ENCODE measurements at regions of chr11 and their contacts with region 1.

Region 1: DNA sequence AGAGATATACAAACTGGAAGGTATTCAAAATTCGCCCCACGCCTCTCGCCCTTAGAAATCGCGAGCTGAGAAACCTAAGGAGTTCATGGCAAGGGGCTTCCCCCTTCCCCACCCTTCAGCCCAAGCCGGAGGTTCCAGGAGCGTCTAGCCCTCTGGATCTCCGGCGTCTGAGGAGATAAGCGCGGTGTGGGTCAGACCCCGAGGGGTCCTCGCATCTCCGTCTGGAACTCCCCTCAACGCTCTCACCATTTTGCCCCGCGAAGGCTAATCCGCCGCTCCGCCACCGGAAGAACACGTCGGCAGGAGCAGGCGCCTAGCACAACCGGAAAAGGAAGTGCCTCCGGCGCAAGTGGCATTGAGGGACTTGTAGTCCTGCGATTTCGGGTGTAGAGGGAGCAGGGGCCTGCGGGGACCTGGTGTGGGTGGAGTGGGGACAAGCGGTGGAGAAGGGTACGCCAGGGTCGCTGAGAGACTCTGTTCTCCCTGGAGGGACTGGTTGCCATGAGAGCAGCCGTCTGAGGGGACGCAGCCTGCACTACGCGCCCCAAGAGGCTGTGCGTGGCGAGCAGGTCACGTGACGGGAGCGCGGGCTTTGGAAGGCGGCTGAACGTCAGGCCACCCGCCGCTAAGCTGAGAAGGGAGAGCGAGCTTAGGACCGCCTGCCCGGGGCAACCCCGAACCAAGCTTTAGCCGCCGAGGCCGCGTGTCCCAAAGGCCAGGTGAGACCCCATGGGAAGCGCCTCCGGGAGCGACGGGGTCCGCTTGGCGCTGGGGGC is at the starts of genes FEN1 and TMEM258:
- DNase-seq: peak; percentile 82 to 91 (median 88)
- ATAC-seq: peak; percentile 91
- H3K4me3 ChIP-seq: peak within 1 kb of the TSS; percentile 82
- H3K4me3 Mint-ChIP-seq: peak within 1 kb of the TSS; percentile 91 to 99 (median 96)
- H3K27ac ChIP-seq: peak within 1 kb of the TSS; percentile 96
- H3K27ac Mint-ChIP-seq: peak within 1 kb of the TSS; percentile 96 to 100 (median 99)
- H3K4me1 ChIP-seq: peaks cover 9 to 14% of the 10 kb centered on the region in 2 donors
- H3K4me1 Mint-ChIP-seq: peaks cover 14 to 57% (median 34%) of the 10 kb centered on the region in 7 donors
- H3K27me3 ChIP-seq: no peaks in the 10 kb centered on the region
- H3K27me3 Mint-ChIP-seq: no peaks in the 10 kb centered on the region
- total RNA-seq, gene FEN1: 7.6 to 101 (median 7.9) TPM
- total RNA-seq, gene TMEM258: 58.4 to 182 (median 83.3) TPM

Region 2: GRCh38 chr11:60906132-60906972 is 886.1 kb before region 1 on chr11 and contains the start of gene PRPF19:
- CTCF ChIA-PET with region 1: no interaction called
- POLR2A ChIA-PET with region 1: no interaction called
- intact Hi-C with region 1: loop called in 1 of 2 experiments (anchors 2 kb)
- DNase-seq: peak; percentile 98 to 100 (median 99)
- ATAC-seq: peak; percentile 96
- H3K4me3 ChIP-seq: peak within 1 kb of the TSS; percentile 89
- H3K4me3 Mint-ChIP-seq: peak within 1 kb of the TSS; percentile 84 to 95 (median 91)
- H3K27ac ChIP-seq: peak within 1 kb of the TSS; percentile 88
- H3K27ac Mint-ChIP-seq: peak within 1 kb of the TSS; percentile 95 to 100 (median 98)
- H3K4me1 ChIP-seq: peaks cover 22 to 26% of the 10 kb centered on the region in 2 donors
- H3K4me1 Mint-ChIP-seq: peaks cover 34 to 69% (median 58%) of the 10 kb centered on the region in 7 donors
- H3K27me3 ChIP-seq: no peaks in the 10 kb centered on the region
- H3K27me3 Mint-ChIP-seq: peaks cover 0 to 11% (median 0%) of the 10 kb centered on the region in 5 donors
- total RNA-seq, gene PRPF19: 72.8 to 139 (median 85.6) TPM

Region 3: DNA sequence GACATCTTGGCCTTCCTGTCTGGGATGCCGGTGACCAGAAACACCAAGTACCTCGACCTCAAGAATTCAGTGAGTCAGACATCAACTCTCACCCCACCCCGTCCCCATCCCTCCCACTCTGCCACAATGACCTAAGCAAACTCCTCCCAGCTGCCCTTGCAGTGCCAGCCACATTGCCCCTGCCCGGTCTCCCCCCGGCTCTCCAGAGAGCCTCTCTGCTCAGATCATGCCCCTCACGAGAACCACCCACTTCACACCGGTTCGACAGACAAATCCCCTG is 63.6 kb before region 1 on chr11:
- CTCF ChIA-PET with region 1: no interaction called
- POLR2A ChIA-PET with region 1: no interaction called
- intact Hi-C with region 1: no loop called
- DNase-seq: no peak
- ATAC-seq: no peak
- H3K4me3 ChIP-seq: no peak overlapping the region
- H3K4me3 Mint-ChIP-seq: no peak overlapping the region
- H3K27ac ChIP-seq: no peak overlapping the region
- H3K27ac Mint-ChIP-seq: peak overlapping the region in 1 of 9 donors; percentile 29
- H3K4me1 ChIP-seq: no peaks in the 10 kb centered on the region
- H3K4me1 Mint-ChIP-seq: peaks cover 4 to 8% (median 5%) of the 10 kb centered on the region in 7 donors
- H3K27me3 ChIP-seq: no peaks in the 10 kb centered on the region
- H3K27me3 Mint-ChIP-seq: peaks cover 0 to 4% (median 0%) of the 10 kb centered on the region in 5 donors

Region 4: DNA sequence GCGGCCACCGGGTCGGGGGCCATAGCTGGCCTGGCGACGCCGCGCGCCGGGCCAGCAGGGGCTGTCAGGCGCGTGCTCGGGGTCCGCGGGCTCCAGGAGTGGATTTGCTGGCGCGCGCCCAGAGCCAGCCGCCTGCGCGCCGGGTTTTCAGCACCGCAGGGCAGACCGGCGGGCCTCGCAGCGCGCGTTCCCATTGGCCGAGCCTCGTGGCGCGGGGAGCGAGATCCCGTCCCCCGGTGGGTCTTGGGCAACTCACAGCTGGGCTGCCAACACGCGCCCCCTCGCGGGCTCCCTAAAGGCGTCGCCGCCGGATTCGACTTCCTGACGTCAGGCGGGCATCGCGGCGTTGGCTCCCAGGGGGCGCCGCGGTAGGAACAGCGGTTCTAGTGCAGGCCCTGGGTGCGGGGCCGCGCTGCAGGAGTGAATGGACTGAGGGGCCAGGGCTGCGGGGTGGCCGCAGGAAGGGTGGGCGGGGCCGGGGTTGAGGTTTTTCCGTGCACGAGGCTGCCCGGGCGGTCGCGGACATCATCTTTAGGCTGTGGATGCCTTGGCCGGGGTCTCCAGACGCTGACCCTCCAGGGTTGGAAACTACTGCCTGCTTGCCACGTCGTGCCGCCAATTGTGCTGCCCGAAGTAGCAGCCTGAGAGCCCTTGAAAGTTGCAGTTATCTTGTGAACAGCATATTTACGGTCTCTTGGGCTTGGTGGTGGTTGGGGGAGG is 24.4 kb after region 1 on chr11 and contains the start of gene FADS1:
- CTCF ChIA-PET with region 1: interaction called, 19 read pairs
- POLR2A ChIA-PET with region 1: interaction called, 14 read pairs
- intact Hi-C with region 1: loop called (anchors 1 kb)
- DNase-seq: peak; percentile 45 to 88 (median 60)
- ATAC-seq: peak; percentile 77
- H3K4me3 ChIP-seq: peak within 1 kb of the TSS; percentile 74
- H3K4me3 Mint-ChIP-seq: peak within 1 kb of the TSS; percentile 84 to 98 (median 92)
- H3K27ac ChIP-seq: peak within 1 kb of the TSS; percentile 51
- H3K27ac Mint-ChIP-seq: peak within 1 kb of the TSS in 5 of 9 donors; percentile 8 to 97 (median 83)
- H3K4me1 ChIP-seq: peaks cover 8 to 12% of the 10 kb centered on the region in 2 donors
- H3K4me1 Mint-ChIP-seq: peaks cover 0 to 24% (median 19%) of the 10 kb centered on the region in 7 donors
- H3K27me3 ChIP-seq: peaks cover 0 to 10% of the 10 kb centered on the region in 2 donors
- H3K27me3 Mint-ChIP-seq: peaks cover 3 to 30% (median 15%) of the 10 kb centered on the region in 5 donors
- total RNA-seq, gene FADS1: 0.62 to 52.1 (median 2.3) TPM

Region 5: DNA sequence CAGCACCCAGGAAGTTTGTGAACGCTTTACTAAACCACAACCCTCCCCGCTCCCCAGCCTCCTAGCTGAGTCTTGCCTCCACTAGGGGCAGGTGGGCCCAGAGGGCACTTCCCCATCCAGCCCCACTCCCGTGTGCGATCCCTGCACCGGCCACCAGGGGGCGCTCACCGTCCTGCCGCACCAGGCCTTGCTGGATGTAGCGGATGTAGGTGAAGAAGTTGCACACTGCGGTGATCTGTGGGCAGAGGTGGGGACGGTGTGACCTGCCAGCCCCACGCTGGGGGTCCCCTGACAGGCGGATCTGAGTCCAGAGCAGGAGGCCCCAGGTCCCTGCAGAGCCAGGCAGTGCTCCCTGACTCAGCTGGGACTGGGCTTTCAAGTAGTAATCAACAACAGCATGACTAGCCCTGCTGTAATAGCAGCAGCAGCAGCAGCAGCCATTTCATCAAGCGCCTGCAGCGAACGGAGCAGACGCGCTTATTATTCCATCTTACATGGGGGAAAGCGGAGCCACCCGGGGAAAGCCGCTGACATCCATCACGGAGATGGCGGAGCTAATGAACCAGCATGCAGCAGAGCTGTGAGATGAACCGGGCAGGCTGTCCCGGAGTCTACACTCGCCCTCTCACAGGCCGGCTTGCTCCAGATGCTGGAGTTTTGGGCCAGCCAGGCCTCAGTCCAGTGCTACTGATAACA is 106.8 kb after region 1 on chr11:
- CTCF ChIA-PET with region 1: interaction called, 22 read pairs
- POLR2A ChIA-PET with region 1: no interaction called
- intact Hi-C with region 1: loop called (anchors 1 to 2 kb)
- DNase-seq: peak; percentile 88 to 98 (median 93)
- ATAC-seq: peak; percentile 98
- H3K4me3 ChIP-seq: no peak overlapping the region
- H3K4me3 Mint-ChIP-seq: no peak overlapping the region
- H3K27ac ChIP-seq: no peak overlapping the region
- H3K27ac Mint-ChIP-seq: peak overlapping the region; percentile 55 to 93 (median 69)
- H3K4me1 ChIP-seq: peaks cover 4% of the 10 kb centered on the region in 2 donors
- H3K4me1 Mint-ChIP-seq: peaks cover 4 to 7% (median 5%) of the 10 kb centered on the region in 7 donors
- H3K27me3 ChIP-seq: no peaks in the 10 kb centered on the region
- H3K27me3 Mint-ChIP-seq: peaks cover 0 to 4% (median 0%) of the 10 kb centered on the region in 5 donors

Region 6: DNA sequence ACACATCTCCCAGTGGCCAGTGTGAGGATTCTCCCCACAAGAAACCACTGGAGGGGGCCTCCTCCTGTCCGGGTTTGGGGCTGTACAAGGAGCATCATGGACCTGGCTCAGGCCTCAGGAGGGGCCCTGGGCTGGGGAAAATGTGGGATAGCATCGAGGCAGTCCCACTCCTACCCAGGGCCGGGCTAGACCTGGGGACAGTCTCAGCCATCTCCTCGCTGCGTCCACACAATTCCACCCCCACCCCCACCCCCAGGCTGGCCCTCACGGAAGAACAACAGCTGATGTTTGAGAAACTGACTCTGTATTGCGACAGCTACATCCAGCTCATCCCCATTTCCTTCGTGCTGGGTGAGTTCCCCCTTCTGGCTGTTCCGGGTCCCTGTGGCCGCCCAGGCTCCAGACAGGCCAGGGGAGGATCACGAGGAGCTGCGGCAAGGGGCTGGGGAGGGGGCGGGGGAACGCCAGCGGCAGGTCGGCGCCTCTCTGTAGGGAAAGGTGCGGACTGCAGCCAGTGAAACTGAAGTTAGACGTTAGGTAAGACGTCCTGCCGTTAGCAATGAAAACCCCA is 162.4 kb after region 1 on chr11:
- CTCF ChIA-PET with region 1: no interaction called
- POLR2A ChIA-PET with region 1: no interaction called
- intact Hi-C with region 1: no loop called
- DNase-seq: no peak
- ATAC-seq: peak; percentile 80
- H3K4me3 ChIP-seq: no peak overlapping the region
- H3K4me3 Mint-ChIP-seq: peak overlapping the region in 8 of 10 donors; percentile 28 to 70 (median 58)
- H3K27ac ChIP-seq: no peak overlapping the region
- H3K27ac Mint-ChIP-seq: no peak overlapping the region
- H3K4me1 ChIP-seq: no peaks in the 10 kb centered on the region
- H3K4me1 Mint-ChIP-seq: peaks cover 0 to 13% (median 3%) of the 10 kb centered on the region in 7 donors
- H3K27me3 ChIP-seq: peaks cover 0 to 5% of the 10 kb centered on the region in 2 donors
- H3K27me3 Mint-ChIP-seq: peaks cover 6 to 25% (median 8%) of the 10 kb centered on the region in 5 donors

Region 7: DNA sequence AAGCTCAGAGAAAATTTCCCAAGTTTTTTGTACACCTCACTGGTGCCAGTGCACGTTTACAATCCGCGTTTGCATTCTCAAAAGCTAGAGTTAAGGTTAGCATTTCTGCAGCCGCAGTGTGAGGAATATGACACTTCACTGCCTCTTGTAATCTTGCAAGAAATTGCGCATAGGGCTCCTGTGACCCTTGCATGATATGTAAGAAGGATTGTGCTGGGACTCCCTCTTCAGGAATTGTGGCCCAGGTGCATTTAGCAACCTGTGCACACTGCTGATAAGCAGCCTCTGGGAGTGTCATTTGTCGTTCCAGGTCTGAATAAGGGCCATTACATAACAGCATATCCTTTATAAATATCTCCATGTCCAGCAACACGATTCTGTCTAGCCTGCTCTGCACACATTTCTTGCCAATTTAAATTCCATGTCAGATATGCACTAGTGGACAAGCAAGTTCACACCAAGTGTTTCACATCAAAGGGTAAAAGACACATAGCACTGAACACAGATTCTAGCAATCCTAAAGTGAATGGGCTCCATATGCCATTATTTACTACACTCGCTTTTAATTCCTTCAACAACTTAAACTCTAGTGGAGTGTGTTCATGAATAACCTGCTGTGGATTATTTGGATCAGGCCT is 262.1 kb after region 1 on chr11:
- CTCF ChIA-PET with region 1: no interaction called
- POLR2A ChIA-PET with region 1: no interaction called
- intact Hi-C with region 1: loop called in 1 of 2 experiments (anchors 1 kb)
- DNase-seq: peak in 7 of 9 donors; percentile 5 to 47 (median 21)
- ATAC-seq: no peak
- H3K4me3 ChIP-seq: no peak overlapping the region
- H3K4me3 Mint-ChIP-seq: no peak overlapping the region
- H3K27ac ChIP-seq: no peak overlapping the region
- H3K27ac Mint-ChIP-seq: no peak overlapping the region
- H3K4me1 ChIP-seq: no peaks in the 10 kb centered on the region
- H3K4me1 Mint-ChIP-seq: no peaks in the 10 kb centered on the region
- H3K27me3 ChIP-seq: no peaks in the 10 kb centered on the region
- H3K27me3 Mint-ChIP-seq: peaks cover 0 to 24% (median 0%) of the 10 kb centered on the region in 5 donors

Region 8: DNA sequence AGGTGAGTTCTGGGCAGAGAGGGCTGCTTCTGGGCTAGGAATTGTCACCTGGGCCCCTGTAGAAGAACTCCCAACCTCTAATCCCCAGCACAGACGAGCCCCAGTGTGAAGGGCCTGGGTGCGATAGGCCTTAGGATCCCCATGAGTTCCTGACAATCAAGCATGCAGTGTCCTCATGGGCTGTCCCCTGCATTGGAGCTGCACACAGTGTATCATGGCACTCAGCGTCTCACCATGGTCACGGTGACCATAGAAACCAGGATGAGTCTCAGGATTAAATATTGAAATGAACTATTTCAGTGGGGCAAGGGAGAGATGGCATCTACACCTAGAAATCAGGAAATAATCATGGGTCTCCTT is 416.3 kb after region 1 on chr11:
- CTCF ChIA-PET with region 1: no interaction called
- POLR2A ChIA-PET with region 1: no interaction called
- intact Hi-C with region 1: loop called in 1 of 2 experiments (anchors 2 kb)
- DNase-seq: no peak
- ATAC-seq: no peak
- H3K4me3 ChIP-seq: no peak overlapping the region
- H3K4me3 Mint-ChIP-seq: no peak overlapping the region
- H3K27ac ChIP-seq: no peak overlapping the region
- H3K27ac Mint-ChIP-seq: no peak overlapping the region
- H3K4me1 ChIP-seq: no peaks in the 10 kb centered on the region
- H3K4me1 Mint-ChIP-seq: no peaks in the 10 kb centered on the region
- H3K27me3 ChIP-seq: no peaks in the 10 kb centered on the region
- H3K27me3 Mint-ChIP-seq: peaks cover 5 to 17% (median 11%) of the 10 kb centered on the region in 5 donors

Region 9: GRCh38 chr11:62726915-62727763 is 934.6 kb after region 1 on chr11 and contains the start of gene HNRNPUL2:
- CTCF ChIA-PET with region 1: no interaction called
- POLR2A ChIA-PET with region 1: no interaction called
- intact Hi-C with region 1: loop called in 1 of 2 experiments (anchors 2 kb)
- DNase-seq: peak; percentile 96 to 100 (median 99)
- ATAC-seq: peak; percentile 89
- H3K4me3 ChIP-seq: peak within 1 kb of the TSS; percentile 87
- H3K4me3 Mint-ChIP-seq: peak within 1 kb of the TSS; percentile 91 to 99 (median 96)
- H3K27ac ChIP-seq: peak within 1 kb of the TSS; percentile 92
- H3K27ac Mint-ChIP-seq: peak within 1 kb of the TSS; percentile 95 to 100 (median 98)
- H3K4me1 ChIP-seq: peaks cover 36 to 38% of the 10 kb centered on the region in 2 donors
- H3K4me1 Mint-ChIP-seq: peaks cover 23 to 65% (median 58%) of the 10 kb centered on the region in 7 donors
- H3K27me3 ChIP-seq: no peaks in the 10 kb centered on the region
- H3K27me3 Mint-ChIP-seq: peaks cover 0 to 2% (median 0%) of the 10 kb centered on the region in 5 donors
- total RNA-seq, gene HNRNPUL2: 43.4 to 77.5 (median 65.3) TPM